A549 (cell line): ENCODE measurements at regions of chr3 and their contacts with region 1.

Region 1: GRCh38 chr3:107574650-107575049 is 51.9 kb downstream of the BBX start:
- DNase-seq: peak; percentile 23 to 56
- ATAC-seq: peak; percentile 76 to 86
- H3K4me3 ChIP-seq: no peak overlapping the region
- H3K27ac ChIP-seq: no peak overlapping the region
- H3K4me1 ChIP-seq: no peaks in the 10 kb centered on the region
- CTCF ChIP-seq: peak; percentile 77
- EP300 ChIP-seq: no peak
- POLR2A ChIP-seq: no peak
- RAD21 ChIP-seq: peak; percentile 69 to 73

Region 2: GRCh38 chr3:107557743-107558142 is 16.9 kb before region 1 on chr3:
- CTCF ChIA-PET with region 1: interaction called, 18 read pairs
- POLR2A ChIA-PET with region 1: no interaction called
- DNase-seq: no peak
- ATAC-seq: no peak
- H3K4me3 ChIP-seq: no peak overlapping the region
- H3K27ac ChIP-seq: no peak overlapping the region
- H3K4me1 ChIP-seq: no peaks in the 10 kb centered on the region
- CTCF ChIP-seq: no peak
- EP300 ChIP-seq: no peak
- POLR2A ChIP-seq: no peak
- RAD21 ChIP-seq: no peak